ENCODE measurements at regions of chr6 and their contacts with region 1.

Region 1: DNA sequence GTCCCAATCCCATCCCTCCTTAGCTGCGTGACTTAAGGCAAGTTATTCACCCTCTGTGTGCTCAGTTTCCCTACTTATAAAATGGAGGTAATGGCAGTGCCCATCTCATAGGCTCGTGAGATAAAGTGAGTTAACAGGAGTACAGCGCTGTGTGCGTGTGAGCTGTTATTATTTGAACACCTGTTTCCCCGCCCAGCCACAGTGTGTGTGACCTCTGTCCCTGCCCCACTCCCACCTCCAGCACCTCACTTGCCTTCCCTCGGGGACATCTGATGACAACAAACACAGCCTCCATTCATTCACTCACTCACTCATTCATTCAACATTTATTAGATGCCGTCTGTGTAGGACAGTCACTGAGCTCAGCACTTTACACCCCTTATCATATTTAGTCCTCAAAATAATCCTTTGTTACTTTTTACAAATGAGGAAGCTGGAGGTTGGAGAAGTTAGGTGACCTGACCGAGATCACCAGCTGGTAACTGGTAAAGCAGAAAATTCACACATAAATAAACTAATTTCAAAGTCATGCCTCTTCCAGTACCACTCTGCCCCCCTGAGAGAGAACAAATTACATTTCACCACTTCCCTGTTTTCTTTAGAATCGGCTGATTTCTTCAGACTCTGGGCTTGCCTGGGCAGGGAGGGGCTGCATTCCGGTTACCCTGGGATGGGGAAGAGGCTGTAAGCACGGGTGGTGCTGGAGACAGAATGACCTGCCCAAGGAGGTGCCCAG is 58.6 kb downstream of the CPNE5 start:
- DNase-seq: no peak
- ATAC-seq: no peak
- H3K4me3 ChIP-seq: no peak overlapping the region
- H3K27ac ChIP-seq: no peak overlapping the region
- H3K4me1 ChIP-seq: no peaks in the 10 kb centered on the region
- H3K27me3 ChIP-seq: peaks cover 6% of the 10 kb centered on the region; the same call in 1 of the 2 replicates
- CTCF ChIP-seq: no peak
- POLR2A ChIP-seq: no peak
- RAD21 ChIP-seq: no peak

Region 2: GRCh38 chr6:36414481-36414880 is 366.1 kb before region 1 on chr6:
- CTCF ChIA-PET with region 1: no interaction called
- POLR2A ChIA-PET with region 1: no interaction called
- RAD21 ChIA-PET with region 1: no interaction called
- intact Hi-C with region 1: no loop called
- DNase-seq: no peak
- ATAC-seq: no peak
- H3K4me3 ChIP-seq: no peak overlapping the region
- H3K27ac ChIP-seq: no peak overlapping the region
- H3K4me1 ChIP-seq: peaks cover 0 to 5% of the 10 kb centered on the region in 2 experiments; a peak in 1 of 4 replicates
- H3K27me3 ChIP-seq: no peaks in the 10 kb centered on the region
- CTCF ChIP-seq: no peak
- POLR2A ChIP-seq: no peak
- RAD21 ChIP-seq: no peak

Region 3: GRCh38 chr6:36791521-36792135 is 11.0 kb after region 1 on chr6:
- CTCF ChIA-PET with region 1: interaction called, 12 read pairs
- POLR2A ChIA-PET with region 1: no interaction called
- RAD21 ChIA-PET with region 1: no interaction called
- intact Hi-C with region 1: no loop called
- DNase-seq: no peak
- ATAC-seq: no peak
- H3K4me3 ChIP-seq: no peak overlapping the region
- H3K27ac ChIP-seq: no peak overlapping the region
- H3K4me1 ChIP-seq: no peaks in the 10 kb centered on the region
- H3K27me3 ChIP-seq: no peaks in the 10 kb centered on the region
- CTCF ChIP-seq: no peak
- POLR2A ChIP-seq: no peak
- RAD21 ChIP-seq: no peak

Measured in HCT116 (cell line).